ENCODE measurements at regions of chr5 and their contacts with region 1.

Region 1: GRCh38 chr5:142769741-142770631 is at the start of gene ARHGAP26:
- DNase-seq: peak; percentile 99
- H3K4me3 Mint-ChIP-seq: peak within 1 kb of the TSS; percentile 95
- H3K27ac Mint-ChIP-seq: peak within 1 kb of the TSS; percentile 33
- H3K4me1 Mint-ChIP-seq: peaks cover 21% of the 10 kb centered on the region
- H3K27me3 Mint-ChIP-seq: no peaks in the 10 kb centered on the region
- CTCF ChIP-seq: peak; percentile 30
- total RNA-seq, gene ARHGAP26: 54.3 and 58.9 TPM in 2 replicates

Region 2: DNA sequence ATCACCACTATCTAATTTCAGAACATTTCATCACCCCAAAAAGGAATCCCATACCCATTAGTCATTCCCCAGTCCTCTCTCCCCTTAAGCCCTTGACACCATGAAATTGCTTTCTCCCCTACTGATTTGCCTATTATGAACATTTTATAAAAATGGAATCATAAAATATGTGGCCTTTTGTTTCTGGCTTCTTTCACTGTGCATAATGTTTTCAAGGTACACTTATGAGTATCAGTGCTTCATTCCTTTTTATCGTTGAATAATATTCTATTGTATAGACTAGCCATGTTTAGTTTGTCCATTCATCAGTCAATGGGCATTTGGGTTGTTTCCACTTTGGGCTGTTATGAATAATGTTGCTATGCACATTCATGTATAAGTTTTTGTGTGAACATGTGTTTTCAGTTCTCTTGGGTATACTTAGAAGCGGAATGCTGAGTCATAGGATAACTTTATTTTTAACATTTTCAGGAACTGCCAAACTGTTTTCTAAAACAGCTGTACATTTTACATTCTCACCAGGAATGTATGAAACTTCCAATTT is 43.7 kb before region 1 on chr5:
- CTCF ChIA-PET with region 1: interaction called, 143 read pairs
- POLR2A ChIA-PET with region 1: interaction called, 58 read pairs
- intact Hi-C with region 1: loop called (anchors 1 kb)
- DNase-seq: peak; percentile 93
- H3K4me3 Mint-ChIP-seq: no peak overlapping the region
- H3K27ac Mint-ChIP-seq: peak overlapping the region; percentile 86
- H3K4me1 Mint-ChIP-seq: peaks cover 28% of the 10 kb centered on the region
- H3K27me3 Mint-ChIP-seq: no peaks in the 10 kb centered on the region
- CTCF ChIP-seq: no peak

Region 3: DNA sequence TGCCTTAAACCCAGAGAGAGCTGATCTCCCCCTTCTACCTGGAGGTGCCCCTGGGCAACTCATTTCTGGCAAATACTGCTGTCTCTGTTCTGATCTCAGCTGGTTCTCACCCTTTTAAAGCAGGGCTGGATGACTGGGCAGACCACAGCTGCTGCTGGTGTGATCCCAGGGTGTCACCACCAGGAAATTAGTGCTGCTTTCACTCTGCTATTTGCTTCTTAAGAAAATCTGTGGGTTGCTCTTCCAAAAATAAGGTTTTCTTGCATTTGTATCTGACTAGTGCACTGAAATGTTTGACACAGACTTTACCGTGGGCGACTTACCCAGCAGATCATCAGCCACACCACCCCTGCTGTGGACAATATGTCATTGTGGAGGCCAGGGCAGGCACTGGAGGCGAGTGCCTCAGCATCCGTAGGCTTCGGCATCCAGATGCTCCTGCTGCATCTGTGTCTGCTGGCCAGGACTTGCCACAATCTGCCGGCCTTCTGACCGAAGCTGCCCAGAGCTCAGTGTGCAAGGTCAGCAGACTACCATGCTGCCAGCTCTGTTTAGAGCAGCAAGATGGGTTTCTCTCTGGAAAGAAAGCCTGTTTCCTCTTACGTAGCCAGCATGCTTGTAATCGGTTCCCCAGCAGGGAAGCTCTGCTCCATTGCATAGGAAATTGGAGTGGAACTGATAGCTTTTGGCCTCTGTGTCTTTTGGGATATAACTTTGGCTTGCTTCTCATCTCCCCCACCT is 13.8 kb after region 1 on chr5:
- CTCF ChIA-PET with region 1: interaction called, 6 read pairs
- POLR2A ChIA-PET with region 1: interaction called, 25 read pairs
- intact Hi-C with region 1: no loop called
- DNase-seq: no peak
- H3K4me3 Mint-ChIP-seq: no peak overlapping the region
- H3K27ac Mint-ChIP-seq: no peak overlapping the region
- H3K4me1 Mint-ChIP-seq: peaks cover 20% of the 10 kb centered on the region
- H3K27me3 Mint-ChIP-seq: no peaks in the 10 kb centered on the region
- CTCF ChIP-seq: no peak

Region 4: DNA sequence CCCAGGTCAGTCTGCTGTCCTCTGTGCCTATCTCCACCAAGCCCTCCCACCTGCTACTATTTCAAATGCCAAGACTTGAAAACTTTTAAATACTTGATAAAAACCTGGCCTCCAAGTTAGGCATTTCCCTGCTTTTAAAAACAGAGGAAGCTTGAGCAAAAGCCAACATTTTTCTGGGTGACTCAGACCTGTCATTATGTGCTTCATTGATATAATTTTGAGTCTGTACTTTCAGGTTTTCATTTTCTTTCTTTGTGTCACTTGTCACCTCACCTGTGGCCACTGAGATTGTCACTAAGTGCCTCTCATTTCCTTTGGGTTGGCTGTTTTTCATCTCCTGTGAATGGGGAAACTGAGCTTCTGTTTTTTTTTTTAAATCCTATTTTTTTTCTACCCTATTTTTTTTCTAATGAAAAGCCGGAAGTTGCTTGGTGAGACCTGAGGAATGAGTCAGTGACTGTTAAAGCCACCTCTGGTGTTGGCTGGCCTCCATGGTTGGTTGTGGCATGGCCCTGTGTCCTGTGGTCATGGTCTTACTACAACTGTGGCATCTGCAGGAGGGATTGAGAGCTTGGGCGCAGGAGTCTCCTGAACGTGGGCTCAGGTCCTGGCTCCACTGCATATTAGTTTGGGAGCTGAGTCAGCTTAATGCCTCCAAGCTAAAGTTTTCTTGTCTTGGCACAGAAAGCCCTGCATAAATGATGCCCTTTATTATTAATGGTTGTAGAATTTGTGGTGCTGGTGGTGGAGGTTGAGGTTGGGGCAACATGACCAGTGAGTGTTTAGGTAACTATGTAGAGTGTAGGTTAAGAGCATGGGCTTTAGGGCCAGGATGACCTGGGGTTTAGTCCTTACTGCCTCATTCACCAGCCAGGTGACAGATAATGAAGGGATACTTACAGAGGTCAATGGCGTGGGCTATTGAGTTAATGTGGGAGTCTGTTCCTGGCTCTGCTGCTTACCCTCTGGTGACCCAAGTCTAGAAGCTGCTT is 57.1 kb after region 1 on chr5:
- CTCF ChIA-PET with region 1: interaction called, 4 read pairs
- POLR2A ChIA-PET with region 1: interaction called, 14 read pairs
- intact Hi-C with region 1: loop called (anchors 1 kb)
- DNase-seq: peak; percentile 83
- H3K4me3 Mint-ChIP-seq: peak overlapping the region; percentile 35
- H3K27ac Mint-ChIP-seq: peak overlapping the region; percentile 73
- H3K4me1 Mint-ChIP-seq: peaks cover 57% of the 10 kb centered on the region
- H3K27me3 Mint-ChIP-seq: no peaks in the 10 kb centered on the region
- CTCF ChIP-seq: no peak

Region 5: GRCh38 chr5:142874537-142874936 is 104.6 kb after region 1 on chr5:
- CTCF ChIA-PET with region 1: interaction called, 88 read pairs
- POLR2A ChIA-PET with region 1: interaction called, 18 read pairs
- intact Hi-C with region 1: loop called (anchors 2 kb)
- DNase-seq: peak; percentile 99
- H3K4me3 Mint-ChIP-seq: no peak overlapping the region
- H3K27ac Mint-ChIP-seq: peak overlapping the region; percentile 32
- H3K4me1 Mint-ChIP-seq: peaks cover 73% of the 10 kb centered on the region
- H3K27me3 Mint-ChIP-seq: no peaks in the 10 kb centered on the region
- CTCF ChIP-seq: no peak